Activated CD8-positive, alpha-beta T cell treated with anti-CD3 and anti-CD28 coated beads, Interleukin-2, amount 10 ng/mL, durations not matched to agents 7 days and 5 days (primary cell): ENCODE measurements at regions of chr1 and their contacts with region 1.

Region 1: DNA sequence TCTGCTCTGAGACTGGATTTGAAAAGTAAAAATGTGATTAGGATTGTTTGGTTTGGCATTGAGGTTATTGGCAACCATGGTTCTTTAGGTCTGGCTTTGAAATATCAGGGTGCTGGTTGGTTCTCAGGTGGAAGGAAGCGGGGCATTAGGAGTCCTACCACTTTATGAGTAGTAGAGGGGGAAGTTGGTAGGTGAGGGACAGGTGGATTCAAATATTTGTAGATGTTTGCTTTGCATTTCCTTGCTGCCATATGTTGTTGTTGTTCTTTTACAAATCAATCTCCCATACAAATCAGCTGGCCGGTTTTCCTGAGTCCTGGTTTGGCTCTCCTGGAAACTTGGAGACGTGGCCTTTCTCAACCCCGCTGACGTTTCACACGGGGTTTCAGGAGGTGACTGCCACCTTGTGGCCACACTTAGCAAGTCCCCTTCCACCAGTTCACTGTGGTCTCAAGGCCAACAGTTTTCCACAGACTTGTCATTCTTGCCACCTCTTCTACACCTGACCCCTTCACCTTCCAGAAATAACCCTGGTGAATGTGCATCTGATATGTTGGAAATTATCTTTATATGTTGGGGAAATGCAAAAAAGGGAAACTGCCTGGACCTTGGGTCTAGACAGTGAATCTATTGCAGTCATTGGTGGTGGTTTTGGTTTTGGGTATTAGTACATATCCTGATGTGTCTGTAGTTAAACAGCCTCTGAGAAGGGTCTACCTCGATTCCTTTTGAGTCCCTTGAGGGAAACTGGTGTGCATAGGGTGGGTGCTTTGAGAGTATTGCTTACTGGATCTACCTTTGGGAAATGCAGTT is 127.0 kb upstream of the KIAA0040 start:
- DNase-seq: peak; percentile 76
- ATAC-seq: peak; percentile 88
- H3K4me3 Mint-ChIP-seq: no peak overlapping the region
- H3K27ac Mint-ChIP-seq: no peak overlapping the region
- H3K4me1 Mint-ChIP-seq: peaks cover 4% of the 10 kb centered on the region
- H3K27me3 Mint-ChIP-seq: peaks cover 4% of the 10 kb centered on the region

Region 2: GRCh38 chr1:175146529-175147213 is 173.0 kb before region 1 on chr1:
- CTCF ChIA-PET with region 1: interaction called, 411 read pairs
- POLR2A ChIA-PET with region 1: interaction called, 3 read pairs
- DNase-seq: peak; percentile 76
- ATAC-seq: peak; percentile 90
- H3K4me3 Mint-ChIP-seq: no peak overlapping the region
- H3K27ac Mint-ChIP-seq: no peak overlapping the region
- H3K4me1 Mint-ChIP-seq: peaks cover 5% of the 10 kb centered on the region
- H3K27me3 Mint-ChIP-seq: peaks cover 21% of the 10 kb centered on the region

Region 3: DNA sequence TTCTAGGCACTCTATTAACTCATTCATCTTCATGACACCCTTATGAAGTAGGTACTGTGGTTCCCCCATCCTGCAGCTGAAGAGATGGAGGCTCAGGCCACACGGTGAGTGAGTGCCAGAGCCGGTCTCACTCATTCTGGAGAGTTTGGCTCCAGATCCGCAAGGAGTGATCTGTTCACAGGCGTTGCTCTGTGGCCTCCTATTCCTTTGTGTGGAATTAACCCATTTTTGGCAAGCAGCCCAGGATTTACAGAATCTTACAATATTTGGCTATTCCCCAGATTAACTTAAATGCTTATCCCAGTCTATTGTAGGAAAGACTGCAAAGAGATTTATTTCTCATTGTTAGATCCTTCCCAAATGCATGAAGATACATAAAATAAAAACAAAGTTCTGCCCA is 156.7 kb before region 1 on chr1:
- CTCF ChIA-PET with region 1: interaction called, 16 read pairs
- POLR2A ChIA-PET with region 1: no interaction called
- DNase-seq: no peak
- ATAC-seq: no peak
- H3K4me3 Mint-ChIP-seq: no peak overlapping the region
- H3K27ac Mint-ChIP-seq: no peak overlapping the region
- H3K4me1 Mint-ChIP-seq: peaks cover 17% of the 10 kb centered on the region
- H3K27me3 Mint-ChIP-seq: no peaks in the 10 kb centered on the region

Region 4: GRCh38 chr1:175192630-175193526 is 126.7 kb before region 1 on chr1 and contains the start of gene KIAA0040:
- CTCF ChIA-PET with region 1: interaction called, 89 read pairs
- POLR2A ChIA-PET with region 1: no interaction called
- DNase-seq: peak; percentile 61
- ATAC-seq: peak; percentile 73
- H3K4me3 Mint-ChIP-seq: peak within 1 kb of the TSS; percentile 91
- H3K27ac Mint-ChIP-seq: peak within 1 kb of the TSS; percentile 87
- H3K4me1 Mint-ChIP-seq: peaks cover 64% of the 10 kb centered on the region
- H3K27me3 Mint-ChIP-seq: no peaks in the 10 kb centered on the region
- total RNA-seq, gene KIAA0040: 50.8 to 51.0 TPM

Region 5: DNA sequence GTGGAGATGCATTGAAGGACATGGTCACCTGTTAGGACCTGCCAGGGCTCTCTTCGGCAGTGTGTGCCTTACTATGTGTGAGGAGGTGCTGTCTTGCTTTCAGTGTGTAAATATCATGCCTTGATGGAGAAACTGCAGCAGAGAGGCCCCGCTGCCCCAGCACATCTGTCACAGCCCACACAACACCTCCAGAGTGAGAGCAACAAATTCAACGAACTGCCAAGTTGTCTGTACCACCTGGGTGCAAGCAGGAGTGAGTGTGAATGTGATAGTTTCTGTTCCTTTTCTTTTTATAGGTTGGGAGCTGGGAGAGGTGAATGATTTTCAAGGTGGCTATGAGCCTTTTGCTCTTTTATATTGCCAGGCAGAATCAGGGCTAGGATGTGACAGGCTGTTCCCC is 12.5 kb before region 1 on chr1:
- CTCF ChIA-PET with region 1: interaction called, 32 read pairs
- POLR2A ChIA-PET with region 1: interaction called, 3 read pairs
- DNase-seq: no peak
- ATAC-seq: no peak
- H3K4me3 Mint-ChIP-seq: no peak overlapping the region
- H3K27ac Mint-ChIP-seq: no peak overlapping the region
- H3K4me1 Mint-ChIP-seq: no peaks in the 10 kb centered on the region
- H3K27me3 Mint-ChIP-seq: peaks cover 21% of the 10 kb centered on the region

Region 6: DNA sequence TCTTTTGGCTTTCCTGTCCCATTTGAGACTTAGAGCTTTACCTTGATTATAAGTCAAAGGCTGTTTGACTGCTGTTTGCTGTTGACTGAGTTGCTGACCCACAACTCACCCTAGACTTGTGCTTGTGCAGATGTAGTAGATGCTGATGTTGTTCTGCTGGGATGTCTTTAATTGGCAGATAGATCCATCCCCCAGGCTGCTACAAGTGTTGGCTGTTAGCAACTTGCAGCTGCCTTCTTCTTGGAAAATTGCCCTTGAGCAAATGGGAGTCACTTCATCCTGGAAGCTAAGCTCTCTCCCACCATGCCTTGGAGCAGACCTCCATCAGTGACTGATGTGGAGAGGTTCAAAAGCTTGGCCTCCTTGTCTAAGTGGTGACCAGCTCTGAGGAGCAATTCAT is 12.3 kb after region 1 on chr1:
- CTCF ChIA-PET with region 1: interaction called, 26 read pairs
- POLR2A ChIA-PET with region 1: no interaction called
- DNase-seq: no peak
- ATAC-seq: no peak
- H3K4me3 Mint-ChIP-seq: no peak overlapping the region
- H3K27ac Mint-ChIP-seq: no peak overlapping the region
- H3K4me1 Mint-ChIP-seq: no peaks in the 10 kb centered on the region
- H3K27me3 Mint-ChIP-seq: peaks cover 19% of the 10 kb centered on the region

Region 7: DNA sequence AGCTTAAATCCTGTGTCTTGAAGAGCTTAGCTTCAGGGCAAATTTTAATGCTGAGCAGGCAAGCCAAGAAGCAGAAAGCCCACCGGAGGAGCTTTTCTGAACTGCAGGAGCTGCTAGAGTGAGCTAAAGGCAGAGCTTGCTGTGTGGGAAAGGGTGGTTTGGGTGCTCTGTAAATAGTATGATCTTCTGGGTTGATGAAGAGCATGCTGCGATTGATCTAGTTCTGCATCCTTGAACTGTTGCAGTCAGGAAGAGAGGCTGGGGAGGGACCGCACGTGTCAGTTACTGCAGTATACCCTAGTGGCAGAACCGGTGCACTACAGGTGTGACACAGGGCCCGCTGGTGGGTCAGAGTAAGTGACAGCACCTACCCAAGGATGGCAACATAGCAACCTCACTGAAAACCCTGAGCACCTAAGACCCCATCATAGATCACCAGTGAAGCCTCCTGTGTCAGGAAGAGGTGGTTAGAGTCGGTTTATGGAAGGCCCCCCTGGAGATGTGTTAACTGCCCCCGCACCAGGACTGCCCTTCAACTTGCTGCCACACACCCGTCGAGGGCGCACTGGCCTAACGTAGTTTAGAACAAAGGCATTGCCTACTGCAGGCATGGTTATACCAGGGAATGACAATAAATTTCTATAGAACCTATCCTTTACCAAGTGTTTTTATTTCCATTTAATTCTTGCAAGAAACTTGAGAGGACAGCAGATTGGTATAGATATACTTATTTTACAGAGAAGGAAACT is 18.9 kb after region 1 on chr1:
- CTCF ChIA-PET with region 1: interaction called, 26 read pairs
- POLR2A ChIA-PET with region 1: no interaction called
- DNase-seq: peak; percentile 67
- ATAC-seq: peak; percentile 89
- H3K4me3 Mint-ChIP-seq: no peak overlapping the region
- H3K27ac Mint-ChIP-seq: no peak overlapping the region
- H3K4me1 Mint-ChIP-seq: no peaks in the 10 kb centered on the region
- H3K27me3 Mint-ChIP-seq: peaks cover 28% of the 10 kb centered on the region